Prostate gland (tissue), 2 donors: ENCODE measurements at regions of chr20 and their contacts with region 1.

Region 1: DNA sequence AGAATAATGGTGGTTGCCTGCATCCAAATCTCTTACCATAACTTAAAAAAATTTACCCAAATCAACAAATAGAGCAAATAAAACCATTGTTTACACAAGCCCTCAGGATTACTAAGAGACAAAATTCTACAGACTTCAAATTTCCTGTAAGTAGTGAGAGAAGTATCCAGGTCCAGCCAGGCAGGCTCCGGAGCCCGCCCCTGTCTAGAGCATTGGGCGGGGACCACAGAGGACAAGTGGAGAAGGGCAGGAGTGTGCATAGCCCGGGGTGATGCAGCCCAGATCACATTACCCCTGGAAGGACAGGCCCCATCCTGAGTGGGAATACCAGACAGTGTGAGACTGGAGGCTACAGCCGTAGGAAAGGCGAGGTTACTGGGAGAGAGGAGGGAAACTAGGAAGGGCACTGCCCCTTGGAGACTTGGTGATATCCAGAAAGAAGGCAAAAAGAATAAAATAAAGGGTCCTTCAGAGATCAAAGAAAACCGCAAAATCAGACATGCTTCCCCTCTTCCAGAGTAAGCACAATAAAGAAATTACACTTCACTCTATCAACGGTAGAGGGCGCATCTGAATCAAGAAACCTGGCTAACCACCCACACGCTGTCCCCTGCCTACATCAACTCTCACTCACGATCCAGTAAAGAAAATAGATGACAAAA is 26.6 kb downstream of the RIN2 start:
- DNase-seq: peak; percentile 79
- H3K4me3 ChIP-seq: no peak overlapping the region
- H3K27ac ChIP-seq: peak overlapping the region; percentile 43 to 50
- H3K4me1 ChIP-seq: no peaks in the 10 kb centered on the region
- H3K27me3 ChIP-seq: no peaks in the 10 kb centered on the region
- CTCF ChIP-seq: peak; percentile 49 to 81 (median 78)
- POLR2A ChIP-seq: no peak

Region 2: DNA sequence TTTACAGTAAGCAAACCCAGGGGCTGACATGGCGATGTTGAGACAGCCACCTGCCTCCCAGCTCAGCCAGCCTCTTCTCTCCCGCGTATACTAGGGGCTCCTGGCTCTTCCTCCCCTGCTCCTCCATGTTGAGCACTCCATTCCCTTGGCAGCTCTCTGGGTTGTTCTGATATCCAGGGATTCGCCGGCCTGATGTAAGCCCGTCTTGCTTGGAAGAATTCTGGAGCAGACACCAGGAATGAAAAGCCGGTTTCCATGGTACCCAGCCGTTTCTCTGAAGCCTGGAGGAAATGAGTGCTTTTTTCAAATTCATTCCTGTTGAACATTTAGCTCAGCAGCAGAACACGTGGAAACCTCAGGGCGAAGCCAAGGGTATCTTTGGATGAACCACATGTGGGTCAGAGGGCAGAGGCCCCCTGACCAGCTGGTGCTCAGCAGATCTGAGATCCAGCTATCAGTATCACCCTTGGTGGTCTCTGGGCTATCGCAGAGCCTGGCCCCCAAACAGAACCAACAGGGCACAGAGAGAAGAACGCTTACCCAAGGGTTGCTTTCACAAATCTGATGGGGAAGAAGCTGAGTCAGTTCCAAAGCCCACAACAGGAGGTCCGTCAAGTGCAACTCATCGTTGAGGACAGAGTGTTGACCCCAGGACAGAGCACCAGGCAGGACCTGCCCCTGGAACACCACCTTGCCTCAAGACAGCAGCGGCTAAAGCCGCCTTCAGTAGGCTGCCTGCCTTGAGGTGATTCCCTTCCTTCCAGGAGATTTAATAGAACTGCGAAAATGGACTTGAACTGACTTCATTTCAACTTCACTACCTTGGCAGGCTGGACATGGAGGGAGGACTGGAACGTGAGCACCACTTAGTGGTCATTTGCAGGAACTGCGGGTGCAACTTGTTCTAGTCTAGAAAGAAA is 122.7 kb before region 1 on chr20:
- intact Hi-C with region 1: no loop called
- DNase-seq: peak; percentile 61
- H3K4me3 ChIP-seq: no peak overlapping the region
- H3K27ac ChIP-seq: no peak overlapping the region
- H3K4me1 ChIP-seq: no peaks in the 10 kb centered on the region
- H3K27me3 ChIP-seq: no peaks in the 10 kb centered on the region
- CTCF ChIP-seq: peak; percentile 92 to 95 (median 94)
- POLR2A ChIP-seq: no peak

Region 3: DNA sequence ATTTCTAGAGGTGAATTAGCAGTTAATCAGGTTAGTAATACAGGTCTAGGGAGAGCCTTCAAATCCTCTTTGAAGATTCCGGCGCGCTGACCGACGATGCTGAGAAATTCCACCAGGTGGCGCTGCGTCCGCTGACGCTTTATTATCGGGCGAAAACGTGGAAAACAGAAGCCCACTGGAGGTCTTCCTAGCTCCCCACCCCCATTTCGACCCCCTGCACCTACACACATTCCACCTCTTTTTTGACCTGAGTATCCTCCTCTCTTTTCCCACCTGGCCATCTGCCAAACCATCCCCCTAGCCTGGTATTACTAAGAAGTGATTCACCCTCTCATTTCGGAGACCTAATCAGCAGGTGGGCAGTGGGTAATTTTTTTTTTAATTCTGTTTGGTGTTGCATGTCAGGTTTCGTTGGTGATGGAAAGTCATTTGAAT is 91.9 kb before region 1 on chr20:
- intact Hi-C with region 1: loop called (anchors 10 kb)
- DNase-seq: peak; percentile 39
- H3K4me3 ChIP-seq: no peak overlapping the region
- H3K27ac ChIP-seq: no peak overlapping the region
- H3K4me1 ChIP-seq: no peaks in the 10 kb centered on the region
- H3K27me3 ChIP-seq: no peaks in the 10 kb centered on the region
- CTCF ChIP-seq: peak; percentile 87 to 96 (median 90)
- POLR2A ChIP-seq: no peak

Region 4: GRCh38 chr20:19828232-19828631 is 43.6 kb after region 1 on chr20:
- intact Hi-C with region 1: no loop called
- DNase-seq: no peak
- H3K4me3 ChIP-seq: no peak overlapping the region
- H3K27ac ChIP-seq: no peak overlapping the region
- H3K4me1 ChIP-seq: no peaks in the 10 kb centered on the region
- H3K27me3 ChIP-seq: no peaks in the 10 kb centered on the region
- CTCF ChIP-seq: no peak
- POLR2A ChIP-seq: no peak